ENCODE measurements at regions of chr4 and their contacts with region 1.

Region 1: GRCh38 chr4:159487284-159487747 is 384.4 kb downstream of the RAPGEF2 start:
- DNase-seq: peak; percentile 63 to 66
- H3K4me3 ChIP-seq: no peak overlapping the region
- H3K4me3 Mint-ChIP-seq: peak overlapping the region; percentile 45
- H3K27ac Mint-ChIP-seq: peak overlapping the region; percentile 12
- H3K4me1 ChIP-seq: peaks cover 23% of the 10 kb centered on the region
- H3K4me1 Mint-ChIP-seq: peaks cover 22% of the 10 kb centered on the region
- H3K27me3 ChIP-seq: no peaks in the 10 kb centered on the region
- H3K27me3 Mint-ChIP-seq: no peaks in the 10 kb centered on the region
- CTCF ChIP-seq: peak; percentile 73 to 81

Region 2: GRCh38 chr4:159593651-159594050 is 106.3 kb after region 1 on chr4:
- CTCF ChIA-PET with region 1: no interaction called
- POLR2A ChIA-PET with region 1: no interaction called
- intact Hi-C with region 1: loop called (anchors 5 kb)
- DNase-seq: no peak
- H3K4me3 ChIP-seq: no peak overlapping the region
- H3K4me3 Mint-ChIP-seq: no peak overlapping the region
- H3K27ac Mint-ChIP-seq: no peak overlapping the region
- H3K4me1 ChIP-seq: no peaks in the 10 kb centered on the region
- H3K4me1 Mint-ChIP-seq: no peaks in the 10 kb centered on the region
- H3K27me3 ChIP-seq: no peaks in the 10 kb centered on the region
- H3K27me3 Mint-ChIP-seq: no peaks in the 10 kb centered on the region
- CTCF ChIP-seq: no peak

Region 3: DNA sequence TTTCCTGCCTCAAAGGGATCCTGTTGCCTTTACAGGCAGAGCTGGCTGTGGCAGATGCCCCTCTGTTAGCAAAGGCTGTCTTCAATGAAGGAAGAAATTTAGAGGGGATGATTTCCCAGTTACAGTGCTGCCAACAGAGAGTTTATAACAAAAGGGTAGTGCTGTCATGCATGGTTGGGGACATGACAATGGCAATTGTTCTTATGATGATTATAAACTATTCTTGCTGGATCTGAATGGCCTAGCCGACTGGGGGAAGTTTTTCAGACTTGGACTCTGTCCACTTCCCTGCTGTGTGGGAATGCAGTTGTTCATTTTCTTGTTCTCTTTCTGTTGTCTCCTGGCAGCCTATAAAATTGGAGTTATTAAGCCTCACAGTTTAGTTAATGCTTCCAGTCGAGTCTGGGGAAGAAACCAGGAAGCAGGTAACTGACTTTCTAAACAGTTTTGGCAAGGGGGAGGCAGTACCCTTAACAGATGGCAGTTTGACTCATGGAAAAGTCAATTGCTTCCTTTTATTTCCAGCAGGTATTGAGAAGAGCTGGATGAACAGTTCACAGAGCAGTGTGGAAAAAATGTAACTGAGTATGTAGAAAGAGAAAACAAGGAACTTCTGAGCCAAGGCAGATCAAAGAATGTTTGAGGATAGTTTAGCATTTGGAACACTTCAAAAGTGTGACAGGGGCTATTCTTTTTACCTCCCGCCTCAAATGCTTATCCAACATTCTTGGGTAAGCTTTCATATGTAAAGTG is 198.2 kb after region 1 on chr4:
- CTCF ChIA-PET with region 1: interaction called, 3 read pairs
- POLR2A ChIA-PET with region 1: no interaction called
- intact Hi-C with region 1: loop called (anchors 10 kb)
- DNase-seq: peak in 1 of 2 experiments; percentile 5
- H3K4me3 ChIP-seq: no peak overlapping the region
- H3K4me3 Mint-ChIP-seq: no peak overlapping the region
- H3K27ac Mint-ChIP-seq: no peak overlapping the region
- H3K4me1 ChIP-seq: 0 out of 2 replicates have a peak, but pooled peaks cover 3% of the 10 kb centered on the region
- H3K4me1 Mint-ChIP-seq: no peaks in the 10 kb centered on the region
- H3K27me3 ChIP-seq: no peaks in the 10 kb centered on the region
- H3K27me3 Mint-ChIP-seq: no peaks in the 10 kb centered on the region
- CTCF ChIP-seq: no peak

Region 4: DNA sequence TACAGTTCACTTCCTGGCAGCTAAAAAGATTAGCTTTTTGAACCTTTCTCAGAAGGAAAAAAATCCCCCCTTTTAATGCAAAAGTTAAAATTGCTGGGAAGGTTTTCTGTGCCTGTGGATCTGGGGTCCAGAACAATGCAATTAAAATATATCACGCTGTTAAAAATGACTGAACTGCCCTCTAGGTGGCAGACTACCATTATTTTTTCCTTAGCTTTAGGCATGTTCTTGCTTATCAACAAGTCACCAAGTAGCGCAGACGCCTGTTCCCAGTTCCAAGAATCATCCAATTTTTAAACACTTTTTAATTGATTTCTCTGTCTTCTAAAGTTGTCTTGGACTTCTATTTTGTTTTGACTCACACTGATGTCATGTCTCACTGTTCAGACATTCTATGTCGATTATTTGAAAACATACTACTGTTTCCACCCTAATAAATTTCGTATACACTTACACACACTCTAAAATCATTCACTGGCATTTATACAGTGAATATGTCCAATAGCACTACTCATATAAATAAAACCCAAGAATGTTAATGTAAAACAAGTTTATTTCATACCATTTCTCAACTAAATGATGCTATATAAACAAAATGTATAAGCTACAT is 277.1 kb after region 1 on chr4:
- CTCF ChIA-PET with region 1: interaction called, 4 read pairs
- POLR2A ChIA-PET with region 1: no interaction called
- intact Hi-C with region 1: loop called (anchors 2 kb)
- DNase-seq: peak in 1 of 2 experiments; percentile 56
- H3K4me3 ChIP-seq: no peak overlapping the region
- H3K4me3 Mint-ChIP-seq: no peak overlapping the region
- H3K27ac Mint-ChIP-seq: no peak overlapping the region
- H3K4me1 ChIP-seq: no peaks in the 10 kb centered on the region
- H3K4me1 Mint-ChIP-seq: no peaks in the 10 kb centered on the region
- H3K27me3 ChIP-seq: no peaks in the 10 kb centered on the region
- H3K27me3 Mint-ChIP-seq: no peaks in the 10 kb centered on the region
- CTCF ChIP-seq: peak; percentile 24 to 50

Region 5: DNA sequence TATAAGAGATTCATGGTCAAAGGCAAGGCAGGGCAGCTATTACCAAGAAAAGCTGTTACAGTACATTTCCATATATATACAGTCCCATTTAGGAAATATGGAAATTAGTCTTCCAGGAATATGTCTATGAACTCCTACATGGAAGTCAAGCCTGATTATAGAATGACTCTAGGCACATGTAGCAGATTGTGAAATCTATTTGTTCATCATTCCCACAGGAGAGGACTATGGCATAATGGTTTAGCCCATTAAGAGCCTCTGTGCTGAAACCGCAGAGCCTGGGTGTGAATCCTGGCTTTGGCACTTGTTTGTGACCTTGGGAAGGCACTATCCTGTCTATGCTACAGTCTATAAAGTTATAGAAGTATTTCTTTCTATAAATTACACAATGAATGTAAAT is 380.4 kb after region 1 on chr4:
- CTCF ChIA-PET with region 1: no interaction called
- POLR2A ChIA-PET with region 1: no interaction called
- intact Hi-C with region 1: loop called (anchors 10 kb)
- DNase-seq: no peak
- H3K4me3 ChIP-seq: no peak overlapping the region
- H3K4me3 Mint-ChIP-seq: no peak overlapping the region
- H3K27ac Mint-ChIP-seq: no peak overlapping the region
- H3K4me1 ChIP-seq: no peaks in the 10 kb centered on the region
- H3K4me1 Mint-ChIP-seq: no peaks in the 10 kb centered on the region
- H3K27me3 ChIP-seq: no peaks in the 10 kb centered on the region
- H3K27me3 Mint-ChIP-seq: no peaks in the 10 kb centered on the region
- CTCF ChIP-seq: no peak

Region 6: GRCh38 chr4:159946983-159947615 is 459.8 kb after region 1 on chr4:
- CTCF ChIA-PET with region 1: interaction called, 3 read pairs
- POLR2A ChIA-PET with region 1: no interaction called
- intact Hi-C with region 1: loop called (anchors 1 kb)
- DNase-seq: peak in 1 of 2 experiments; percentile 43
- H3K4me3 ChIP-seq: no peak overlapping the region
- H3K4me3 Mint-ChIP-seq: no peak overlapping the region
- H3K27ac Mint-ChIP-seq: no peak overlapping the region
- H3K4me1 ChIP-seq: no peaks in the 10 kb centered on the region
- H3K4me1 Mint-ChIP-seq: no peaks in the 10 kb centered on the region
- H3K27me3 ChIP-seq: no peaks in the 10 kb centered on the region
- H3K27me3 Mint-ChIP-seq: no peaks in the 10 kb centered on the region
- CTCF ChIP-seq: peak; percentile 54 to 71

Region 7: DNA sequence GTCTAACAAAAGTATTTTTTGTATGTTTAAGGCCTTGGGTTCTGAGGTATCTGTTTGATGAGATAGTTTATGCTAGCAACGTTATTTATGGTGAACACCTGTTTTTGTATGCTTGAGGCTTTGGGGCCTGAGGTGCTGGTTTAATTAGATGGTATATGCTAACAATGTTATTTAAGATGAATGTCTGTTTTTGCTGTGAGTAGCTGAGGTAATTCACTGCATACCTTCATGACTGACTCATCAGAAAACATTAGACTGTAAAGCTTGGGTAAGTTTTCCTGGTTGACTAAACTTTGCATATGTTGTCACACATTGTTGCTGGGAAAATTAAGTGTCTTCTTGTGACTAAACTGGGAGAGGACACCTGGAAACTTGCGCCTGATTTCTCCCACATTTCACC is 642.1 kb after region 1 on chr4:
- CTCF ChIA-PET with region 1: no interaction called
- POLR2A ChIA-PET with region 1: no interaction called
- intact Hi-C with region 1: loop called (anchors 1 kb)
- DNase-seq: no peak
- H3K4me3 ChIP-seq: no peak overlapping the region
- H3K4me3 Mint-ChIP-seq: no peak overlapping the region
- H3K27ac Mint-ChIP-seq: no peak overlapping the region
- H3K4me1 ChIP-seq: peaks cover 37% of the 10 kb centered on the region
- H3K4me1 Mint-ChIP-seq: peaks cover 7% of the 10 kb centered on the region
- H3K27me3 ChIP-seq: no peaks in the 10 kb centered on the region
- H3K27me3 Mint-ChIP-seq: no peaks in the 10 kb centered on the region
- CTCF ChIP-seq: no peak

Measured in Caco-2 (cell line).